Cardiac septum (tissue), 1 donor: ENCODE measurements at regions of chrX and their contacts with region 1.

Region 1: GRCh38 chrX:38999967-39000745 is 198.9 kb downstream of the MID1IP1 start:
- DNase-seq: no peak

Region 2: GRCh38 chrX:38335382-38335781 is 664.8 kb before region 1 on chrX:
- intact Hi-C with region 1: no loop called
- DNase-seq: no peak

Region 3: DNA sequence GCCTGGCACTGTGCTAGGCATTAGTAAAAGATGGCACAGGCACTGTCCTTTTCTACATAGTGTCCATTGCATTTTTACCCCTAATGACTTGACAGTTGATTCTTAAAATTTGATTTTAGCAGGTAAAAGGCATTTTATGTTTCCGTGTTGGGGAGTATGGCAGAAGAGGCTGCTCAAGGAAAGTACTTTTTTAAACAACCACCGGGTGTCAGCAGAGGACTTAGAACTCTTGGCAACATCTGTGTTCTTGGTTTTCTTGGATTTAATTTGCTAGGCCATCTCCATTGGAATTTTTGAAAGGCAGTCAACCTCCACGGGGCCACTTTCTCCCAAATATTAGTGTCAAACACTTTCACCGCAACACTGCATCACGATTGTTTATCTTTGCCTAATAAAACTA is 335.9 kb before region 1 on chrX:
- intact Hi-C with region 1: no loop called
- DNase-seq: no peak

Region 4: GRCh38 chrX:39065051-39065871 is 65.1 kb after region 1 on chrX:
- intact Hi-C with region 1: loop called (anchors 10 kb)
- DNase-seq: no peak

Region 5: GRCh38 chrX:39398963-39399261 is 398.8 kb after region 1 on chrX:
- intact Hi-C with region 1: no loop called
- DNase-seq: no peak